Dendritic cell treated with granulocyte-macrophage colony-stimulating factor and Interleukin-4, amounts not matched to agents 40 ng/mL and 50 ng/mL, for 4 days (primary cell): ENCODE measurements at regions of chr3 and their contacts with region 1.

Region 1: GRCh38 chr3:179236669-179237301 is 14.1 kb downstream of the KCNMB3 start:
- H3K4me3 Mint-ChIP-seq: no peak overlapping the region
- H3K27ac Mint-ChIP-seq: no peak overlapping the region
- H3K4me1 Mint-ChIP-seq: no peaks in the 10 kb centered on the region
- H3K27me3 Mint-ChIP-seq: no peaks in the 10 kb centered on the region

Region 2: GRCh38 chr3:179309225-179310078 is 72.7 kb after region 1 on chr3:
- intact Hi-C with region 1: loop called (anchors 10 kb)
- H3K4me3 Mint-ChIP-seq: no peak overlapping the region
- H3K27ac Mint-ChIP-seq: no peak overlapping the region
- H3K4me1 Mint-ChIP-seq: no peaks in the 10 kb centered on the region
- H3K27me3 Mint-ChIP-seq: peaks cover 1% of the 10 kb centered on the region